Tibial artery (tissue), 4 donors: ENCODE measurements at regions of chr16 and their contacts with region 1.

Region 1: DNA sequence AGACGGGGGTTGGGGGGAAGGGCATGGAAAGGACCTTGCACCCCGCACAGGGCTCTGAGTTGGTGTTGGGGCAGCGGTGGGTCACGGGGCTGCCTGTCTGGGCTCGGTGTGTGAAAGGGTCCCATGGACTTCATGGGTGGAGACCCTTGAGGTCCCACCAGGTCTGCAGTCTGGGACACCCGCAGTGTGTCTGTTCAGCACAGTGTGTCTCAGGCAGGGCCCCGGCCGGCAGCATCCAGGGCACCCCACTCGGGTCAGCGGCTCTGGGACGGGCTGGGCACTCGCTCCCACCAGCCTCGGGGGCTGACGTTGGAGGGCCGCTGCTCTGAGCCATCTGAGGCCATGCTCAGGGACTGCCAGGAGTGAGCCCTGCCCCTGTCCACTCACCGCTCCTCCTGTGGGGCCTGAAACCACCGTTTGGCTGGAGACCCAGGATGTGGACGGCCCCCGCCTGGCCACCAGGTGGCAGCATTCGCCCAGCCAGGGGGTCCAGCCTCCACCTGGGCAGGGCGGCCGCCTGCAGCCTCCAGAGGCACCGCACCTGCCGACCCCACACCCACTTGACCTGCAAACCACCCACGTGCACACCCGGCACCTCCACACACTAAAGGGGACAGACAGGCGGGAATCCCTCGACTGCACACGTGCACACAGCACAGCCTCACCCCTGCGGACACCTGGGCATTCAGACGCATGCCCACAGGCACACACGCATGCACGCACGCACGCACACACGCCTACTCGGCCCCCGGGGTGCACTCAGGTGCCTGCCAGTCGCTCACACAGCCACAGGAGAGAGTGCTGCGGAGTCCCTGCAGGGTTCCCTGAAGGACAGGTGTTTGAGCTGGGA is 10.1 kb upstream of the ZFPM1 start:
- DNase-seq: peak in 1 of 2 donors; percentile 80
- H3K4me3 ChIP-seq: no peak overlapping the region
- H3K27ac ChIP-seq: no peak overlapping the region
- H3K4me1 ChIP-seq: peaks cover 0 to 8% (median 4%) of the 10 kb centered on the region in 4 donors
- H3K27me3 ChIP-seq: peaks cover 0 to 54% of the 10 kb centered on the region in 2 donors
- CTCF ChIP-seq: peak; percentile 88 to 93

Region 2: DNA sequence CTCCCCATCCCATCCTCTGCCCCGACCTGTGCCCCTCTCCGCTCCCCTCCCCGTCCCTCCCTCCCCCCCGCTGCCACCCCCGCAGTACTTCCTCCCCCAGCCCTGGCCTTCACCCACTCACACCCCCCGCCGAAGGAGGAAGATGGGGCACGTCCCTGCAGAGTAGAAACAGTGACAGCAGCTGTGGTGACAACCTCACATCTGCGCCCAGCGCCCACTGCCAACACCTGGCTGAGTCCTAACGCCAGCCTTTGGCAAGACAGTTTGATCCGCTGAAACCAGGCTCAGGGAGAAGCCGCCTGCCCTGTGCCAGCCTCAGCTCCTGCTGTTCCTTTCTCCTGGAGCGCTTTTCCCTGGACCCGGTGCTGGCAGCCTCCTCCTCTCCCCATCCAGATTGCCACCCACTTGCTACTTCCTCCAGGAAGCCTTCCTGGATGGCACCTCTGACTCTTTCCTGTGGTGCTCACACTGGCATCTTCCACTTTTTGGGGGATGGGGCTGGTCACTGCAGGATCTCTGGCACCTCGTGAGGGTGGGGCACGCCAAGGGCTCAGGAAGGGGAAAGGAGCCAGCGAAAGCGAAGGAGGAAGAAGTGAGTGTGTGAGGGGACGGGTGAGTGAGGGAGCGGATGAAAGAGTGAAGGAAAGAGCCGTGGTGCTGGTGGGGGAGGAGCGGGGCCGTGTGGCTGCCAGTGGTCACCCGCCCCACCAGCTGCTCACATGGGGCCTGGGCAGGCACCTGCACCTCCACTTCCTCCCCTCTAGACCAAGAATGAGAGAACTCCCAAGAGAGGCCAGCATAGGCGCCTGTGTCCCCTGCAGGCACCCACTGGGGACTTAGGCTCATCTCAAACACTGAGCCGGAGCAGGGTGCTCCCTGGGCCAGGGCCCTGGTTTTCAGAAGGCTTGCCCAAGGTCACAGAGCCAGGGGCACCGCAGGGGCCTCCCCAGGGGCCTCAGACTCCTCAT is 37.1 kb after region 1 on chr16:
- intact Hi-C with region 1: no loop called
- DNase-seq: no peak
- H3K4me3 ChIP-seq: no peak overlapping the region
- H3K27ac ChIP-seq: no peak overlapping the region
- H3K4me1 ChIP-seq: no peaks in the 10 kb centered on the region
- H3K27me3 ChIP-seq: peaks cover 0 to 16% of the 10 kb centered on the region in 2 donors
- CTCF ChIP-seq: no peak

Region 3: GRCh38 chr16:88527186-88527936 is 84.4 kb after region 1 on chr16:
- intact Hi-C with region 1: loop called (anchors 2 kb)
- DNase-seq: no peak
- H3K4me3 ChIP-seq: no peak overlapping the region
- H3K27ac ChIP-seq: no peak overlapping the region
- H3K4me1 ChIP-seq: peaks cover 0 to 36% (median 6%) of the 10 kb centered on the region in 4 donors
- H3K27me3 ChIP-seq: peaks cover 0 to 47% of the 10 kb centered on the region in 2 donors
- CTCF ChIP-seq: peak; percentile 81 to 83

Region 4: GRCh38 chr16:88561485-88562369 is 118.8 kb after region 1 on chr16:
- intact Hi-C with region 1: loop called (anchors 5 kb)
- DNase-seq: peak in 1 of 2 donors; percentile 43
- H3K4me3 ChIP-seq: peak overlapping the region; percentile 37 to 49
- H3K27ac ChIP-seq: peak overlapping the region; percentile 30 to 45
- H3K4me1 ChIP-seq: peaks cover 0 to 10% (median 4%) of the 10 kb centered on the region in 4 donors
- H3K27me3 ChIP-seq: peaks cover 0 to 30% of the 10 kb centered on the region in 2 donors
- CTCF ChIP-seq: peak; percentile 55 to 57

Region 5: DNA sequence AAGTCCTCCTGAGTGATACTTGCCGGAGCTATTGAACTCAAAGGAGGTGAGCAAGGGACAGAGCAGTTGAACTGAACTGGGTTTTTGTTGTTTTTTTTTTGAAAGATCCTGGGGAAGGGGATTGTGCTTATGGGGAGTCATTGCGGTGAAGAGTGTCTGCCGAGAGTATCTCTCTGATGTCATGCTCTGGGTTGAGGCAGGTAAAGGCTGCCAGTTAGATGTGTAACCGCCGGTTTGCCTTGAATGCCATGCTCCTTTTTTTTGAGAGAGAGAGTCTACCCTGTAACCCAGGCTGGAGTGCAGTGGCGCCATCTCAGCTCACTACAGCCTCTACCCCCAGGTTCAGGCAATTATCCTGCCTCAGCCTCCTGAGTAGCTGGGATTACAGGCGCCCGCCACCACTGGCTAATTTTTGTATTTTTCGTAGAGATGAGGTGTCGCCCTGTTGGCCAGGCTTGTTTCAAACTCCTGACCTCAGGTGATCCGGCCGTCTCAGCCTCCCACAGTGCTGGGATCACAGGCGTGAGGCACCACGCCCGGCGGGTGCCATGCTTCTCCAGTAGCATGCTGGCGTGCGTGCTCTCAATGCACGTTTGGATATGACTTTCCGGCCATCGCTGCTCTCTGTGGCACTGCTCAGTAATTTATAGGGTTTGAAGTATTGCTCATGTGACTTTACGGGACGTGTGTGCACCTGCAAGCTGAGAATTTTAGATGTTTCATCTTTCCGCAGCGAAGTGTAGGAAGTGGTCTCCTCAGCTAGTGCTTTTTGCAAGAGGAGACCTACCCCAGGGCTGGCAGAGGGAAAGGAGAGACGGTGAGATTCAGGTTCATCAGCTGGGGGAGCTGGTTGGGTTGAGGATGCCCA is 135.7 kb after region 1 on chr16:
- intact Hi-C with region 1: no loop called
- DNase-seq: no peak
- H3K4me3 ChIP-seq: no peak overlapping the region
- H3K27ac ChIP-seq: no peak overlapping the region
- H3K4me1 ChIP-seq: peaks cover 0 to 5% (median 0%) of the 10 kb centered on the region in 4 donors
- H3K27me3 ChIP-seq: no peaks in the 10 kb centered on the region
- CTCF ChIP-seq: no peak

Region 6: GRCh38 chr16:88785106-88785924 is 342.4 kb after region 1 on chr16 and contains the start of gene PIEZO1:
- intact Hi-C with region 1: loop called (anchors 10 kb)
- DNase-seq: peak; percentile 57 to 84
- H3K4me3 ChIP-seq: peak within 1 kb of the TSS; percentile 76 to 96
- H3K27ac ChIP-seq: peak within 1 kb of the TSS; percentile 87 to 90
- H3K4me1 ChIP-seq: peaks cover 0 to 45% (median 33%) of the 10 kb centered on the region in 4 donors
- H3K27me3 ChIP-seq: peaks cover 0 to 4% of the 10 kb centered on the region in 2 donors
- CTCF ChIP-seq: peak; percentile 89 to 94